GM13976 (cell line): ENCODE measurements at regions of chr19 and their contacts with region 1.

Region 1: GRCh38 chr19:46776927-46777911 is 11.2 kb downstream of the SLC1A5 start:
- DNase-seq: peak; percentile 13
- CTCF ChIP-seq: no peak

Region 2: DNA sequence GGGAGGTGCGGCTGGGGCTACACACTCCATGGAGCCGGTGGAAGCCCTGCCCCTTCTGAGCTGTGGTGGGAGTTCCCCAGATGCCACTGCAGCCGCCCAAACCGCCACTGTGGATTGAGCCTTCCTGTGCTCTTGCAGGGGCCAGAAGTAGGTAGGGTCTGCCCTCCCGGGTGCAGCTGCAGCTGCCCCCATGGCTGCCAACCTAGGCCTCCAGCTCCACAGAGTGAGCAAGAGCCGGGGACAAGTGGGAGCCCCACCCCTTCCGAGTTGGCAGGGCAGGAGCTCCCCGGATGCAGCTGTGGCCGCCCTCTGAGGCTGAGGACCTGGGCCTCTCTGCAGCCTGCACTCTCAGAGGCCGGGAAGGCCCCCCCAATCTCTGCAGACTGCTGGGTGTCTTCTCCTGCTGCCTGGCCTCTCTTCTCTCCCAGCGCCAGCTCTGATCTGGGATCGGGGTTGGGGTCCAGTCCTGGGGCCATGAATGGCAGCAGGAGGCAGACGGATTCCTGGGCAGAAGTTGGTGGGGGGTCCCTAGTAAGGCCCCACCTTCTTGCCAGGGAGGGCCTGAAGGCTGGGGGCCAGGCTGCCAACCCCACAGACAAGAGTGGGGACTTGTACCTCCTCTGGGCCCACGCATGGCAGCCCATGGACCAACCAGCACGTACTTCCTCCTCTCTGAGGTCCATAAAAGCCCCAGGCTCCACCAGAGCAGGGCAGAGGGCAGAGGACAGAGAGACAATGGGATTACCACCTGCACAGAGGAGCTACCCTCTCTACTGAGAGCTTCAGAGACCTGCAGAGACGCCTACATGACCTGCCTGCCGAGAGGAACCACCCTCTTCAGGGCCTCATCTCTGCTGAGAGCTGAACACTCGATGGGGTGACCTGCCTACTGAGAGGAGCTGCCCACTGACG is 44.5 kb after region 1 on chr19:
- in situ Hi-C with region 1: loop called (anchors 10 kb)
- DNase-seq: peak; percentile 62
- CTCF ChIP-seq: no peak